ENCODE measurements at regions of chr20 and their contacts with region 1.

Region 1: GRCh38 chr20:10558635-10559187 is 115.1 kb downstream of the JAG1 start:
- DNase-seq: no peak
- H3K4me3 ChIP-seq: no peak overlapping the region
- H3K27ac ChIP-seq: no peak overlapping the region
- H3K4me1 ChIP-seq: no peaks in the 10 kb centered on the region
- H3K27me3 ChIP-seq: no peaks in the 10 kb centered on the region
- CTCF ChIP-seq: no peak

Region 2: DNA sequence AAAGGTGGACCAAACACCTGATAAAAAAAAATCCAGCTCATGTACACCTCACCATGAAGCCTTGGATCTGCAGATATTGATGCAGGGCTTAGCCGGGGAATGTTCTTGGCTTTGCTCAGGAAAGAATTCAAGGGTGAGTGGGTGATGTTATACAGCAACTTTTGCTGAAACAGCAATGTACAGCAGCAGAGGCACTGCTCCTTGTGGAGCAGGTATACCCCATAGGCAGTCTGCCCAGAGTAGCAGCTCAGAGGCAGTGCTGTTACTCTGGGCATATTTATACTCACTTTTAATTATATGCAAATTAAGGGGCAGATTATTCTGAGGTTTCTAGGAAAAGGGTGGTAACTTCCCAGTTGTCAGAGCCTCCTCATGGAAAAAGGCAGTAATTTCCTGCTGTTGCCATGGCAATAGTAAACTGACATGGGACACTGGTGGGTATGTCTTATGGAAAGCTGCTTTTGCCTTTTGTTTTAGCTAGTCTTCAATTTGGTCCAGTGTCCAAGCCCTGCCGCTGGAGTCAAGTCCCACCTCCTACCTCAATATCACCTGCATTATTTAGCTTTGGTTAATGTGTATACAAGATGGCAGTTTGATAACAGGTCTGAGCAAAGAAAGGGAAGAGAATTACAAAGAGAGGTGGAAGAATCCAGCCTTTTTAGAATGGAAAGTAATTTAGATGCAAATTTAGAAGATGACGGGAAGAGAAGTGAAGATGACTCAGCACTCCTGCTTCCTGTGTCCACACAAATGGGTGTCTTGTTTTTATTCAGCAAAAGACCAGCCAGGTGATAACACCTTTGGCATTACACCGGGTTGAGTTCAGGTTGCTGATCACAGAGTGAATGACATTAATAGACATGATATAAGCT is 225.2 kb after region 1 on chr20:
- intact Hi-C with region 1: no loop called
- DNase-seq: no peak
- H3K4me3 ChIP-seq: no peak overlapping the region
- H3K27ac ChIP-seq: no peak overlapping the region
- H3K4me1 ChIP-seq: no peaks in the 10 kb centered on the region
- H3K27me3 ChIP-seq: no peaks in the 10 kb centered on the region
- CTCF ChIP-seq: no peak

Region 3: DNA sequence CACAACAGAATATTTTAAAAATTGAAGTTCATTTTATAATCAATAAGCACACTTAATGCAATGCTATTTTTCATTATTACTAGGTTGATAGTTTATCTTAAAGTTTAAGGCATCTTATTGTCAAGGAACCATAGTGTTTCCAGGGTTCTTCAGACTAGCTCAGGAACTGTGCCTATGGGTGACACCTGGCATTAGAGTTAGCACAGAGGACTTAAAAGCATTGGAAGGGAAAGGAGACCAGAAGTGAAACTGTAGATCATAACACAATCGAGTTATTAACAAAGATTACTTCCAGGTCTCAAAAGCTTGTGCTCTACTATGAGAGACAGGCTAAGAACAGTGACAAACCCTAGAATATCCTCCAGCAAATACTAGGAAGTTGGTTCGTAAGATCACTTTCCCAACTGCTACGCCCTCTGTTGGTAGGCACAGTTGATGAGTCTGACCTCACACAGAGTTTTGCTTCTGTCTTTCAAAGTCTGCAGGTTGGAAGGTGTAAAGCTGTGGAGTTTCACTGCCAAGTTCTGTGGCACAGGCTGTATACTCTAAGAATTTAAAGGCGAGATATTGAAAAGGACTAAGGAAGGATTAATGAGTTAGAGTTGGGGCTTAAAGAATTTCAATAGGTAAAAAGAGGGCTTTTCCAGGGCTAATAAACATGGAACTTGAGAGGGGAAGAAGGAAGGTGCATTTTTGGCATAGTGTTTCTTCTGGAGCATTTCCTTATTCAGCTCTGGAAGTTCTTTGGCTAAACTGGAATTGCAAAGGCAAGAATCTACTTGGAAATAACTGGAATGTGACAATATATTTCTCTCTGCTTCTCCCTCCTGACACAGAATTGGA is 646.4 kb after region 1 on chr20:
- intact Hi-C with region 1: loop called (anchors 5 kb)
- DNase-seq: peak; percentile 78
- H3K4me3 ChIP-seq: no peak overlapping the region
- H3K27ac ChIP-seq: no peak overlapping the region
- H3K4me1 ChIP-seq: no peaks in the 10 kb centered on the region
- H3K27me3 ChIP-seq: no peaks in the 10 kb centered on the region
- CTCF ChIP-seq: peak; percentile 72